Cardiac septum (tissue), 1 donor: ENCODE measurements at regions of chr2 and their contacts with region 1.

Region 1: DNA sequence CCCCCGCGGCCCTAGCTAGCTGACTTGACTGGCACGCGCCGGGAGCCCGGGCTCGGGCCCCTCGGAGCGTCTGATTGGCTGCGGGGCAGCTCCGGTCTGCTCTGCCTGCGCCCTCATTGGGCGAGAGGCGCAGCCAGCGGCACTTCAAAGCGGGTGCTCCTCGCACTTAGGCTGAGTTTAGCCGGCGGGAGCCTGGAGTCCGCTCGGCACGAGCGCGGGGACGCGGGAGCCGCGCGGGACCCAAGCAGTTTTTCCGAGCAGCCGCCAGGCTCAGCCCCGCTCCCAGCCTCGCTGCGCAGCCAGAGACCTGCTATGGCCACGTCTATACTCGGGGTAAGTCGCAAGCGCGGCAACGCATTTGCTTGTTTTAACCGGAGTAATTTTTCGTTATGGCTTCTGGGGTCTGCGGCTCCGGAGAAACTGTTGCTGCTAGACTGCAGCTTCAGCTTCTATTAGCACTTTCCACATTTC is at the start of gene SP9:
- DNase-seq: no peak
- total RNA-seq, gene SP9: not detected

Region 2: GRCh38 chr2:174235680-174236079 is 99.1 kb before region 1 on chr2:
- intact Hi-C with region 1: no loop called
- DNase-seq: no peak

Region 3: GRCh38 chr2:174248187-174248997 is 86.4 kb before region 1 on chr2 and contains the start of gene OLA1:
- intact Hi-C with region 1: loop called (anchors 2 kb)
- DNase-seq: peak; percentile 97
- total RNA-seq, gene OLA1: 51.2 TPM

Region 4: GRCh38 chr2:174376967-174377366 is 42.2 kb after region 1 on chr2:
- intact Hi-C with region 1: no loop called
- DNase-seq: no peak